SK-N-SH (cell line): ENCODE measurements at regions of chr1 and their contacts with region 1.

Region 1: DNA sequence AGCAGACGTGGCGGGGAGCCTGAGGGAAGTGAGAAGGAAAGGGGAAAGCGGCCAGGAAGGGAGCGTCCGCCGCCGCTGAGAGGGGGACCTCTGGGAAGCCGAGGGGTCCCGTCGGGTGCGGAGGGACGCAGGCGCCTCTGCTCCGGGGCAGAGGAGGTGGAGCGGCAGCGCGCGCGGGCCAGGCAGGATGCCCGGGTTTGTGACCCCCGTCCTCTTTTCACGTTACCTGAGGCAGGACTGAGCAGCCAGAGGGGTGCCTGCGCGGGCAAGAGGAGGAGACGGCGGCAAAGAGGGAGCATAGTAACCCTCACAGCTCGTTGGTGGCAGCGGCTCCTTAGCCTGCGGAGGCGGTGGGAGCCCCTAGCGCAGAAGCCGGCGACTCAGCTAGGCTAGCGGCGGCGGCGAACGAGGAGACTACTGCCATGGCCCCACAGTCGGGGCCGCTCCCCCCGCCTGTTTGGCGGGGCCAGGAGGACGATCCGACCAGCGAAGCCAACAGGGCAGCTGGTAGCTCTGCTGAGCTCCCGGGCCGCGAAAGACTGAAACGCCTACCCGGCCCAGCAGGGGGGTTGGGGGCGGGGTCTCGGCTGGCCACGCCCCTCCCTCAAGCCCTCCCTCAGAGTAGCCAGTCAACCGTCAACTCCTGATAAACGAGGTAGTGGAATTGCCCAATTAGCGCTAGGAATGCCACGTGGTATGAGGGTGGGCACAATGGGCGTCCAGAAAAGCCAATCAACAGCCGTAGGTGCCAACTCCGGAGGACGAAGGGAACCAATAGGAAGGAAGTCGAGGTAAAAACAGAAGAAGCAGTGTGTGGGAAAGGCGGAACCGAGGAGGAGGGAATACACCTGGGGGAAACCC is at the start of gene TESK2:
- DNase-seq: peak; percentile 98
- H3K4me3 ChIP-seq: peak within 1 kb of the TSS; percentile 68 to 98
- H3K27ac ChIP-seq: peak within 1 kb of the TSS in 1 of 2 experiments; percentile 47; a peak in 2 of 4 replicates
- H3K4me1 ChIP-seq: peaks cover 0 to 5% of the 10 kb centered on the region in 2 experiments; a peak in 2 of 4 replicates
- H3K27me3 ChIP-seq: no peaks in the 10 kb centered on the region
- CTCF ChIP-seq: no peak
- EP300 ChIP-seq: no peak
- RAD21 ChIP-seq: no peak
- polyA plus RNA-seq, gene TESK2: 1.3 TPM in 2 replicates

Region 2: GRCh38 chr1:45348716-45349677 is 141.9 kb before region 1 on chr1:
- CTCF ChIA-PET with region 1: interaction called, 55 read pairs
- POLR2A ChIA-PET with region 1: no interaction called
- DNase-seq: no peak
- H3K4me3 ChIP-seq: no peak overlapping the region
- H3K27ac ChIP-seq: no peak overlapping the region; a peak in 1 of 4 replicates
- H3K4me1 ChIP-seq: peaks cover 8 to 11% of the 10 kb centered on the region in 2 experiments; a peak in 2 of 4 replicates
- H3K27me3 ChIP-seq: no peaks in the 10 kb centered on the region
- CTCF ChIP-seq: no peak
- EP300 ChIP-seq: no peak
- RAD21 ChIP-seq: no peak

Region 3: DNA sequence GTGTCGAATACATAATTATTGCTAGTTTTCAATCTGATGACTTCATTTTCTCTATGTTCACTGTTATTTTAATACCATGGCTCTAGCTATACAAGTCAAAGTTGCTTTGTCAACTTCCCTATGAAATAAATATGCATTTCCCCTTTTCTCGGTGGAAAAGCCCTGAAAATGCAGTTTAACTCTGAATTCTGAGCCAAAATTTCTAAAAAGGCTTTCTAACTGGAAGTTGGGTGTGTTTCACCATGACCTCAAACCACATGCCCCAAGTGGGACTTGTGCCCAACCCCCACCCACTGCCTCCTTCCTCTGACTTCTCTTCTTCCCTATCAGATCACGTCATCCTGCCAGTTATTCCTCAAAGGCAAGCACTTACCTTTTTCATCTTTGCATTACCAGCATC is 1104.3 kb after region 1 on chr1:
- CTCF ChIA-PET with region 1: no interaction called
- POLR2A ChIA-PET with region 1: no interaction called
- DNase-seq: no peak
- H3K4me3 ChIP-seq: no peak overlapping the region
- H3K27ac ChIP-seq: no peak overlapping the region
- H3K4me1 ChIP-seq: no peaks in the 10 kb centered on the region
- H3K27me3 ChIP-seq: no peaks in the 10 kb centered on the region
- CTCF ChIP-seq: no peak
- EP300 ChIP-seq: no peak
- RAD21 ChIP-seq: no peak